Activated T-helper 2 cell treated with anti-CD3 and anti-CD28 coated beads, Interferon-gamma antibody, Interleukin-2, Interleukin-4, amounts not matched to agents 10 μg/mL and 5 μg/mL and 100 μg/mL, durations not matched to agents 14 hours and 24 hours and 36 hours (primary cell): ENCODE measurements at regions of chr5 and their contacts with region 1.

Region 1: GRCh38 chr5:132083071-132083678 is 9.6 kb downstream of the CSF2 start:
- DNase-seq: no peak
- H3K4me3 Mint-ChIP-seq: no peak overlapping the region
- H3K27ac Mint-ChIP-seq: peak overlapping the region; percentile 76
- H3K4me1 Mint-ChIP-seq: peaks cover 74% of the 10 kb centered on the region
- H3K27me3 Mint-ChIP-seq: no peaks in the 10 kb centered on the region

Region 2: DNA sequence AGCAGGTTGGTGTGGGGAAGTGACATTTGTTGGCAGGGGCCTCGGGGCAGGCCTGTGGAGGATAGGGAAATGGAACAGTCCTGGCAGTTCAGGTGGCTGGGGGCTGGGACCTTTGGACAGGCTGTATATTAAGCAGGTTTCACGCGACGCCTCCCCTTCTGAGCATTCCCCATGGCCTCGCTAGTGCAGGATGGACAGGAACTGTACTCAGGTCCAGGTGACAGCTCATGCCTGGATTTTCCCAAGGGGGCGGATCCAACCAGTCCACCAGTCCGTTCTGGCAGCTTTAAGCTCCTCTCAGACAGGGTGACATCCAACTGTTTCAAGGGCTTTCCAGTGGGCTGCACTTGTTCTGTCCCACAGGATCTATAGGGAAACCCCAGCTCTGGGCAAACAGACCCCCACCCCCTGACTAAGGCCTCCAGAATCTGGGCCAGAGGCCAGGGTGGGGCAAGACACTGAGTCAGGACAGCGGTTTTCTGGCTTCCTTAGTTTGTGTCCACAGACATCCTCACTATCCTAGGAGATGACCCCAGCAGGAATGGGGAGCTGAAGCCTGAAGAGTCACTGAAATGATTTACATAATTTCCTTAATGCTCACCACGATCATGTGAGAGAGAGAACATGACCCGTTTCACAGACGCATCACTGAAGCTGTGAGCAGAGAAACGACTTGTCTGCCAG is 11.4 kb after region 1 on chr5:
- intact Hi-C with region 1: loop called (anchors 1 kb)
- DNase-seq: no peak
- H3K4me3 Mint-ChIP-seq: no peak overlapping the region
- H3K27ac Mint-ChIP-seq: peak overlapping the region; percentile 77
- H3K4me1 Mint-ChIP-seq: peaks cover 70% of the 10 kb centered on the region
- H3K27me3 Mint-ChIP-seq: no peaks in the 10 kb centered on the region